K562 (cell line): ENCODE measurements at regions of chr1 and their contacts with region 1.

Region 1: GRCh38 chr1:85612704-85613361 is 32.3 kb downstream of the CCN1 start:
- DNase-seq: peak; percentile 29 to 42 (median 38)
- ATAC-seq: peak; percentile 94
- H3K4me3 ChIP-seq: no peak overlapping the region
- H3K27ac ChIP-seq: no peak overlapping the region
- H3K4me1 ChIP-seq: peaks cover 0 to 5% of the 10 kb centered on the region in 2 experiments; a peak in 2 of 5 replicates
- H3K27me3 ChIP-seq: no peaks in the 10 kb centered on the region
- CTCF ChIP-seq: peak; percentile 55 to 78 (median 68)
- EP300 ChIP-seq: no peak
- POLR2A ChIP-seq: no peak
- RAD21 ChIP-seq: peak; percentile 67 to 77

Region 2: DNA sequence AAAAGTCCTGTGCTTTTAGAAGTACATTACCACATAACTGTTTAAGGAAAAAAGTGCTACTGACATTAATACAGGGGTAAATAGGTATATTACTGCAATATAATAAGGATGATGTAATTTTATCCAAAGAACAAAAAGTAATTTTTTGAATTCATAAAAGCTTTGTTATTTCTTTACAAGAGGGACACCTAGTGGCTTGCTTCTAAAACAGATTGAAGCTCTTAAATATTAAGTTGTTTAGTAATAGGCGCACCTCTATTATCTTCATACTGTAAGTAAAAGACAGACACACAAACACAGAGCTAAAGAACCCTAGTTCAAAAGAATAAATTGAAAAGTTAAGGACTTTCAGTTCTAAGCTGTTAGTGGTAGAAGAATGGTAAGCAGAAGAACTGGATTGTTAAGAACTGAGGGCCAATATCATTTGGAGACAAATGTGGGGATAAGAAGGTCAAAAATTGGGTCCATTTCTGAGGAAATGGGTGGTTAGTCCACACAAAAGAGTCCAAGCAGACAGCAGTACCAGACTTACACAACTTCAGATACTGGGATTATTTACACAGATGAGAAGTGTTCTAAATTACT is 80.0 kb after region 1 on chr1:
- CTCF ChIA-PET with region 1: no interaction called
- POLR2A ChIA-PET with region 1: no interaction called
- in situ Hi-C with region 1: no loop called
- intact Hi-C with region 1: loop called (anchors 2 kb)
- DNase-seq: peak in 1 of 4 experiments; percentile 6
- ATAC-seq: peak; percentile 37; the same call in 1 of the 3 replicates
- H3K4me3 ChIP-seq: no peak overlapping the region
- H3K27ac ChIP-seq: no peak overlapping the region
- H3K4me1 ChIP-seq: no peaks in the 10 kb centered on the region; a peak in 1 of 5 replicates
- H3K27me3 ChIP-seq: no peaks in the 10 kb centered on the region
- CTCF ChIP-seq: peak in 1 of 3 experiments; percentile 50; a peak in 2 of 6 replicates
- EP300 ChIP-seq: no peak
- POLR2A ChIP-seq: no peak
- RAD21 ChIP-seq: peak; percentile 35 to 53

Region 3: DNA sequence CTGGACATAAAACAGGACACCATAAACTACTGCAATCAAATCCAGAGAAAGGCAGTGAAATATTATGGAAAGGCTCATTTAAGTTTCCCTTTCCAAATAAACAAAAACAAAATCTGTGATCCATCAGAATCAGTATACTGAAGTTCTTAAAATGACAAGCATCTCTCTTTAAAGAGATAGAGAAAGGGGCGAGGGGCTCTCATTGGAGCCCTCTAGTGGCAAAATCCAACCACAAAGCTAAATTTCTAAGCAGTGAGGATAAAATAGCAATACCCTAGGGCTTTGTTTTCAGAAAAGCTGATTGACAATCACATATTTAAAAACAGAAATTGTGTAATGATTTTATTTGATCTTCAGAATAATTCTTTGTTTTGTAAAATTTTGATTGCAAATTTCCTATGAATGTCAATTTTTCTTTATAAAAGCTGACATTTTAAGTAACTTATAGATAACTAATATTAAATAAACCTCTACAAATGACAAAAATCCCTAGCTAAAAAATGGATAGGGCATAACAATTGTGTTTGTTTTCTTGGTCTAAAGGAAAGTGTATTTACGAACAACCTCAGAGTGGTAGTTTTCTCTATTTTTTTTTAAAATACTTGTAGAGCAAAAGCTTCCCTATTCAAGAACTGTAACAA is 405.6 kb after region 1 on chr1:
- CTCF ChIA-PET with region 1: no interaction called
- POLR2A ChIA-PET with region 1: no interaction called
- in situ Hi-C with region 1: no loop called
- intact Hi-C with region 1: loop called (anchors 2 kb)
- DNase-seq: peak; percentile 7 to 22 (median 20)
- ATAC-seq: peak; percentile 39; the same call in 1 of the 3 replicates
- H3K4me3 ChIP-seq: no peak overlapping the region
- H3K27ac ChIP-seq: no peak overlapping the region
- H3K4me1 ChIP-seq: no peaks in the 10 kb centered on the region
- H3K27me3 ChIP-seq: no peaks in the 10 kb centered on the region
- CTCF ChIP-seq: peak in 2 of 3 experiments; percentile 49 to 55; a peak in 4 of 6 replicates
- EP300 ChIP-seq: no peak
- POLR2A ChIP-seq: no peak
- RAD21 ChIP-seq: peak; percentile 38 to 58; a peak in 3 of 4 replicates